Activated CD4-positive, alpha-beta T cell treated with anti-CD3 and anti-CD28 coated beads for 36 hours (primary cell): ENCODE measurements at regions of chr10 and their contacts with region 1.

Region 1: GRCh38 chr10:21732067-21732772 is 198.2 kb downstream of the MLLT10 start:
- DNase-seq: peak; percentile 74
- ATAC-seq: peak; percentile 88
- H3K4me3 Mint-ChIP-seq: no peak overlapping the region
- H3K27ac Mint-ChIP-seq: no peak overlapping the region
- H3K4me1 Mint-ChIP-seq: peaks cover 26% of the 10 kb centered on the region
- H3K27me3 Mint-ChIP-seq: no peaks in the 10 kb centered on the region

Region 2: DNA sequence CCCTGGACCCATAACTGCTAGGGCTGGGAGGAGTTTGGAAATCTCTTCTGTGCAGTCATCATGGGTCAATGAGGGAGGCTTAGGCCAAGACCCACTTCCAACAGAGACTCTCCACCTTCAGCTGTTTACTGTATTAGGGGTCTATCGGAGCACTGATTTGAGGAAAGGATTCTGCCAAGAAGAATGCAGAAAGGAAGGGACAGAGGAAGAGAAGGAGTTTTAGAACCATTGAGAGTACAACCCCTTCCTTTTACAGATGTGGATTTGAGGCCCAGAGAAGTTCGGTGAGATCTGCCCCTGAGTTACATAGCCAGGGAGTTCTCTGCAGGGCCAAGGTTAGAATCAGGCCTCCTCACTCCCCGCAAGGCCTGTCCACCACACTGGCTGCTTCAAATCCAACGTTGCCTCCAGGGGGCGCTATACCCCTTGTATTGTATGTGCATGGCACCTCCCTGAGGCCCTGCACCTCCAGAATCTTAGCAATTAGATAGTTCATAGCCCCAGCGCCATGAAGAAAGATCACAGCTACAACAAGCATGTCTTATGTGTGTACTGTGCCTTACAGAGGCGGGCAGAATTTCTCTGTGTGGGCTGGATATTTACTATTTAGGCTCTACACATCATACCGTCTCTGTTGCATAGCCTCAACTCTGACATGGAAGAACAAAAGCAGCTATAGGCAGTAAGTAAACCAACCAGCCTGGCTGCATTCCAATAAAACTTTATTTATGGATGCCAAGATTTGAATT is 453.6 kb before region 1 on chr10:
- CTCF ChIA-PET with region 1: no interaction called
- POLR2A ChIA-PET with region 1: no interaction called
- intact Hi-C with region 1: loop called (anchors 2 kb)
- DNase-seq: peak; percentile 92
- ATAC-seq: peak; percentile 92
- H3K4me3 Mint-ChIP-seq: no peak overlapping the region
- H3K27ac Mint-ChIP-seq: no peak overlapping the region
- H3K4me1 Mint-ChIP-seq: no peaks in the 10 kb centered on the region
- H3K27me3 Mint-ChIP-seq: peaks cover 2% of the 10 kb centered on the region

Region 3: DNA sequence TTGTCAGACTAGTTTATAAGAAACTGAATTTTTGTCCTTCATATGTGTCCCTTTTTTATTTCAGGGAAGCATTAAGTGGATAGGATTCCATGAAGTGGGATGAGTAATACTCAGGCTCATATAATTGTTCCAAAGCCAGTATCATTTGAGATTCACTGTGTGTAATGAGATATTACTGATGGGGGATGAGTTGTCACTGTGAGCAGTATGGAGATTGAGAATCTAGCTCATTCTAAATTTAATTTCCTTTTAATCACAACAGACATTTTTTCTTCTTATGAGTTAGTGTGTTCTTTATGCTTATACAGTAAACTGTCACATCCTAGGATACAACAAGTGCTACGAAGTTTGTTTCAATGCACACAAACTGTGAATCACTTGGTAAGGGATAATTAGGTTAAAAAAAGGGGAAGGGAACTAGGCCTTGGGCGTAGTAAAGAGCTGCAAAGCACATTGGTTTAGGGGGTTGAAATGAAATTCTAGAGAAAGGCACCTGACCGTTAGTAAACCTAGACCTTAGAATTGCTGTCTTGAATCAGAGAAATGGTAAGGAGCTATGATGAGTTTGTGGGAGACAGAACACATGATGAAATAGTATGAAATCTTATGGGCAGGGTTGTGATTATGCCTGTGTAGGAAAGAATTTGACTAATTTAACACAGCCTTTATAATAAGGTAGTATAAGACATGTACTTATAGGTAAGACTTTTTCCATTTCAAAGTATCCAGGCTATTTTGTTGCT is 44.8 kb before region 1 on chr10:
- CTCF ChIA-PET with region 1: no interaction called
- POLR2A ChIA-PET with region 1: no interaction called
- intact Hi-C with region 1: no loop called
- DNase-seq: no peak
- ATAC-seq: peak; percentile 76
- H3K4me3 Mint-ChIP-seq: no peak overlapping the region
- H3K27ac Mint-ChIP-seq: peak overlapping the region; percentile 58
- H3K4me1 Mint-ChIP-seq: peaks cover 8% of the 10 kb centered on the region
- H3K27me3 Mint-ChIP-seq: no peaks in the 10 kb centered on the region

Region 4: DNA sequence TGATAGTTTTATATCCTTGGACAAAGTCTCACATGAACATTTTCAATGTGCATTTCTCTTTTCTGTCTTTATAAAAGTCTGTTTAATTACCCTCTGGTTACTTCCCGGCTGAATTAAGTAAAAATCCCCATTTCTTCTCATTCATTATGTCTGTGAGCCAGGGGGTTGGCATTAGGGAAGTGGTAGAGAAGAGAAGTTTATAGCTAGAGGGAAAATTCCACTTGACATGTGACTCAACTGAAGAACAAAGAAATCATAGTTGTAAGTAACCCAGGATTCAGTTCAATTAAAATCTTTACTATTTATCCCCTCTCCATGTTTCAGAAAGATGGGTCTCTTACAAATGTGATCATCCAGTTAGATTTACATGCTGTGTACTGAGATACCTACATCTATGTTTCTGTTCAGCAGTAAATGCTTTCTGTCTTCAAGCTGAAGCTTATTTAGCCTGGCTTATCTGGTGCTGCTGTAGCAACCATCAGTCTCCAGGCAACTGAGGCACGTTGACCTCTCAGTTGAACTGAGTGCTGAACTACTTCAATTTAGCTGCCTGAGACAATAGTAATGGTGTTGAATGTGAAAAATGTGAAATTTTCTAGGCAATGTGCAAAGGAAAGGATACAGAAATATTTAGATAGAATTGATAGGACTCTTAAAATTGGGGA is 16.6 kb before region 1 on chr10:
- CTCF ChIA-PET with region 1: interaction called, 13 read pairs
- POLR2A ChIA-PET with region 1: no interaction called
- intact Hi-C with region 1: no loop called
- DNase-seq: no peak
- ATAC-seq: no peak
- H3K4me3 Mint-ChIP-seq: no peak overlapping the region
- H3K27ac Mint-ChIP-seq: no peak overlapping the region
- H3K4me1 Mint-ChIP-seq: peaks cover 17% of the 10 kb centered on the region
- H3K27me3 Mint-ChIP-seq: no peaks in the 10 kb centered on the region

Region 5: GRCh38 chr10:21953585-21954057 is 221.4 kb after region 1 on chr10:
- CTCF ChIA-PET with region 1: no interaction called
- POLR2A ChIA-PET with region 1: no interaction called
- intact Hi-C with region 1: loop called in 1 of 2 experiments (anchors 10 kb)
- DNase-seq: no peak
- ATAC-seq: peak; percentile 98
- H3K4me3 Mint-ChIP-seq: no peak overlapping the region
- H3K27ac Mint-ChIP-seq: no peak overlapping the region
- H3K4me1 Mint-ChIP-seq: peaks cover 7% of the 10 kb centered on the region
- H3K27me3 Mint-ChIP-seq: no peaks in the 10 kb centered on the region